HEK293 (cell line): ENCODE measurements at regions of chr18 and their contacts with region 1.

Region 1: GRCh38 chr18:36296650-36297416 is 680 bp upstream of the FHOD3 start:
- H3K4me3 ChIP-seq: peak overlapping the region; percentile 62
- H3K27ac ChIP-seq: peak overlapping the region; percentile 48; the same call in 1 of the 2 replicates
- H3K4me1 ChIP-seq: no peaks in the 10 kb centered on the region
- CTCF ChIP-seq: peak; percentile 79

Region 2: DNA sequence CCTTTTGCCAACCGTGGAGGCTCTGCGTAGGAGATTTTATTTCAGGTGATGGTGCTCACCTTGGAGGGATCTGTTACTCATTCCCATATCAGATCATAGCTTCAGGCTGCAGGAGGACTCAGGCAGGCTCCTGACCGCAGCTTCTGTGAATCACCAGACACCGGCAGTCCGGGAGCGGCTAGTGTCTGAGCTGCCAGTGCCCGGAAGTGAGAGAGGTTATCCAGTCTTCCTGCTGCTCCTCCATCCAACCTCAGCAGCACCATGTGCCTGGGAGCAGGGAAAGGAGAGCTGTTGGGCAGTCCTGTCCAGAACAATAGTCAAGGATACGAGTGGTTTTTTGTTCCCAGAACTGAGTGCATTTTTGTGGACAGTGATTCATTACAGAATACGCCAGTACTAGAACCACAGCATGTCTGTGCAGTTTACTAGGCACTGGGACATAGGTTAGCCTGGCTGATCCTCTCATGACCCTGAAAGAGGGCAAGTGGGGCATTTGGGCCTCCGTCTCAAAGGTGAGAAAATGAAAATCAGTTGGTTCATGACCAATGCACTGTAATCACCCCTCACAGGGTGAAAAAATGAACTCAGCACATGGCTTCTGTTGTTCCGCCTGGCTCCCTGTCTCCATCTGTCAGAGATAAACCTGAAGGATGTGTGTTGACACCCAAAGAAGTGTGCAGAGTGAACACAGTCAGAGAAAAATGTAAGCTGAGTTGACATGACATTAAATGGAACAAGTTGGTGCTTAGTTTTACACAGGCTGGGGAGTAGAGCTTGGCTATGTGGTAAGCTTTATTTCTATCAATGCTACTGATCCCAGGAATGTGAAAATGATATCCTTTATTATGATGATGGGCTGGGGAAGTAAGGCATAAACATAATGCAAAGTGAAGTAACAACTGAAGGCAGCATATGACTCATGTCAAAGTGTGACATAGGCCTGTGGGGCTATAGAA is 12.9 kb after region 1 on chr18:
- CTCF ChIA-PET with region 1: interaction called, 5 read pairs
- POLR2A ChIA-PET with region 1: interaction called, 11 read pairs
- H3K4me3 ChIP-seq: no peak overlapping the region
- H3K27ac ChIP-seq: no peak overlapping the region
- H3K4me1 ChIP-seq: no peaks in the 10 kb centered on the region
- CTCF ChIP-seq: no peak